Spleen (tissue), 13 donors: ENCODE measurements at regions of chr4 and their contacts with region 1.

Region 1: GRCh38 chr4:26842911-26843310 is 17.7 kb upstream of the STIM2 start:
- DNase-seq: no peak
- H3K4me3 ChIP-seq: no peak overlapping the region
- H3K27ac ChIP-seq: no peak overlapping the region
- H3K4me1 ChIP-seq: peaks cover 0 to 13% (median 7%) of the 10 kb centered on the region in 6 donors
- H3K27me3 ChIP-seq: no peaks in the 10 kb centered on the region
- CTCF ChIP-seq: no peak
- POLR2A ChIP-seq: no peak

Region 2: DNA sequence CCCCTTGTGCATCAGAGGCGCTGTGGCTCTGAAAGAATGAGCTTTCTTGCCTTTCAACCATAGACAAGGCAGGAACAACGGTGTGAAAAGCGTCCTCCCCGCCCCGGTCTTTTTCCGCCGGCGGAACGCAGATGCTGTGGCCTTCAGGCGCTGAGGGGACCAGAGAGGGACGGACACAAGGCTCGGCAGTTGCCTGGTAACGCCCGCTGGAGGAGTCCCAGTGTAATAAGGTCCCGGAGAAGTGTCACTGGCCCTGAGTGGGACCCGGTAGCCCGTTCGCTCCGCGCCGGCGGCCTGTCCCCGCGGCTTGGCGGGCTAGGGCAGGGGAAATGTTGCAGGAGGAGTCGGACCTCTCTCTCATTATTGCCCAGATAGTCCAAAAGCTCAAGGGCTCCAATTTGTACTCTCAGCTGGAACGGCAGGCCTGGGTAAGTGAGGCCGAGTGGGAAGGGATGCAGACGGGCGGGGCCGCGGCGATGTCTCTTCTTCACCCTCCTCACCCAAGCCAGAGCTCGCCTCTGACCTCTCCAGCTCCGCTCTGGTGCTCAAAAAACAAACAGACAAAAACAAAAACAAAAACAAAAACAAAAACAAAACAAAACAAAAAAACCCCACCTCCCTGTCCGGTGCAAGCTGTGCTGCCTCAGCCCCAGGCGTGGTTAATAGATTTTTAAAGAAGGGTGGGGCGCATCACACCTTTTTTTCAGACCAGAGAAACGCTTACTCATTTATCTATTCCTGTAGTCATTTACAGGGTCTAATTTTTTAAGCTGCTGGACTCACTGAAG is 258.9 kb before region 1 on chr4 and contains the start of gene TBC1D19:
- intact Hi-C with region 1: loop called (anchors 5 kb)
- DNase-seq: peak; percentile 97
- H3K4me3 ChIP-seq: peak within 1 kb of the TSS; percentile 61 to 94 (median 76)
- H3K27ac ChIP-seq: peak within 1 kb of the TSS; percentile 67 to 92 (median 82)
- H3K4me1 ChIP-seq: peaks cover 8 to 27% (median 16%) of the 10 kb centered on the region in 6 donors
- H3K27me3 ChIP-seq: no peaks in the 10 kb centered on the region
- CTCF ChIP-seq: no peak
- POLR2A ChIP-seq: peak in 1 of 3 donors; percentile 28
- total RNA-seq, gene TBC1D19: 4.5 to 18.0 (median 9.4) TPM

Region 3: GRCh38 chr4:27123123-27123768 is 280.3 kb after region 1 on chr4:
- intact Hi-C with region 1: no loop called
- DNase-seq: no peak
- H3K4me3 ChIP-seq: no peak overlapping the region
- H3K27ac ChIP-seq: no peak overlapping the region
- H3K4me1 ChIP-seq: no peaks in the 10 kb centered on the region
- H3K27me3 ChIP-seq: no peaks in the 10 kb centered on the region
- CTCF ChIP-seq: no peak
- POLR2A ChIP-seq: no peak